Activated T-helper 1 cell treated with anti-CD3 and anti-CD28 coated beads, Interleukin-12 subunit alpha, Interleukin-12 subunit beta, Interleukin-2, Interleukin-4 antibody, amounts not matched to agents 30 ng/mL and 10 ng/mL and 1 ng/mL, durations not matched to agents 14 hours and 24 hours and 36 hours (primary cell): ENCODE measurements at regions of chr1 and their contacts with region 1.

Region 1: GRCh38 chr1:26164036-26164860 is 4.5 kb downstream of the C1orf232 start:
- DNase-seq: peak; percentile 41
- H3K4me3 Mint-ChIP-seq: peak overlapping the region; percentile 49
- H3K27ac Mint-ChIP-seq: no peak overlapping the region
- H3K4me1 Mint-ChIP-seq: peaks cover 22% of the 10 kb centered on the region
- H3K27me3 Mint-ChIP-seq: peaks cover 47% of the 10 kb centered on the region

Region 2: DNA sequence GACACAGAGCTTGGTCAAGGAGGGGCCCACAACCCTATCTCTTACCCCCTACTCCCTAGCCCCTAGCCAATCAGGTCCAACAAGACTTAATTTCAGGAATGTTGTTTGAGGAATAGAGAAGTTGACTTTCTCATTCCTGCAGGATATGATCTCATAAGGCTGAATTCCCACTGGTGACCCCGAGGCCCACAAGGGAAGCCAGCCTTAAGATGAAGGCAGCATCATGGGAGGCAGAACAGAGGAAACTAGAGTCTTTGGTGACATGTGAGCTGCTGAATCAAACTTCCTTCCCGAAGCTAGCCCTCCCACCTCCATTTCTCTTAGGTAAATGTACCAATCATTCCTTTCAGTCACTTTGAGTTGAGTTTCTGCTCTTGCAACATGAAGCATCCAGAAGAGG is 61.7 kb before region 1 on chr1:
- intact Hi-C with region 1: loop called (anchors 1 kb)
- DNase-seq: no peak
- H3K4me3 Mint-ChIP-seq: no peak overlapping the region
- H3K27ac Mint-ChIP-seq: no peak overlapping the region
- H3K4me1 Mint-ChIP-seq: peaks cover 14% of the 10 kb centered on the region
- H3K27me3 Mint-ChIP-seq: peaks cover 9% of the 10 kb centered on the region